ENCODE measurements at regions of chr14 and their contacts with region 1.

Region 1: GRCh38 chr14:50954811-50955372 is 10.6 kb upstream of the PYGL start:
- DNase-seq: peak in 3 of 4 experiments; percentile 12 to 30 (median 19)
- ATAC-seq: peak; percentile 72
- H3K4me3 ChIP-seq: no peak overlapping the region
- H3K27ac ChIP-seq: peak overlapping the region; percentile 91; the same call in 2 of the 3 replicates
- H3K4me1 ChIP-seq: peaks cover 0 to 12% of the 10 kb centered on the region in 2 experiments; a peak in 3 of 5 replicates
- H3K27me3 ChIP-seq: no peaks in the 10 kb centered on the region
- CTCF ChIP-seq: peak in 2 of 3 experiments; percentile 29 to 51; a peak in 3 of 6 replicates
- EP300 ChIP-seq: no peak
- POLR2A ChIP-seq: no peak
- RAD21 ChIP-seq: peak; percentile 38 to 42

Region 2: GRCh38 chr14:50785457-50786063 is 169.3 kb before region 1 on chr14:
- CTCF ChIA-PET with region 1: no interaction called
- POLR2A ChIA-PET with region 1: no interaction called
- in situ Hi-C with region 1: no loop called
- intact Hi-C with region 1: loop called (anchors 5 kb)
- DNase-seq: no peak
- ATAC-seq: no peak
- H3K4me3 ChIP-seq: no peak overlapping the region
- H3K27ac ChIP-seq: no peak overlapping the region
- H3K4me1 ChIP-seq: peaks cover 0 to 6% of the 10 kb centered on the region in 2 experiments; a peak in 1 of 5 replicates
- H3K27me3 ChIP-seq: no peaks in the 10 kb centered on the region
- CTCF ChIP-seq: no peak
- EP300 ChIP-seq: no peak
- POLR2A ChIP-seq: no peak
- RAD21 ChIP-seq: no peak

Region 3: DNA sequence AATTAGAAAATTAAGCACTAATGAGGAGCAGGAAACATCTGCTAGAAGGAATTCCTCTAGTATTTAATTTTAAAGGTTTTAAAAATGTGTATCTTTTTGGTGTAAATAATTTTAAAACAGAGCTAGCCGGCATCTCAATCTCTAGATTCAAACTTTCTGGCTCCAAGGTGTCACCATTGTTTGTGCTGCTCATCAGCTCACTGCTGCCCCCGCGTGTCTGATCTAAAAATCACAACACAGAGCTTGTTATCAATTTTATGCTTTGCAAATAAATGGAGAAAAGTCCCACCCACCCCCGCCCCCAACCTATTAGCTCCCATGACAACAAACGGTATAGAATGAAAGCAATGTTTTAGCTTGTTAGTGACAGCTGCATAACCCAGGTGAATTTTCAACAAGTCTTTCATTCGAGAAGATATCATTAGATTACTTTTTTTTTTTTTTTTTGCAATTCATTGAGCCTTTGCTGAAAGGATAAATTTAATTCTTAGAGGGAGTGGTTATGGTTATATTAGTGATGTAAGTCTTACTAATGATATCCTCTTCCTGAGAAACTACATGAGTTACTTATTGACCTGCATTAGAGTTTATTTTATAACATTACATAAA is 94.3 kb before region 1 on chr14:
- CTCF ChIA-PET with region 1: interaction called, 3 read pairs
- POLR2A ChIA-PET with region 1: no interaction called
- in situ Hi-C with region 1: no loop called
- intact Hi-C with region 1: loop called (anchors 2 kb)
- DNase-seq: peak; percentile 54 to 75 (median 68)
- ATAC-seq: peak; percentile 76
- H3K4me3 ChIP-seq: no peak overlapping the region
- H3K27ac ChIP-seq: no peak overlapping the region
- H3K4me1 ChIP-seq: no peaks in the 10 kb centered on the region; a peak in 1 of 5 replicates
- H3K27me3 ChIP-seq: peaks cover under 1 to 7% of the 10 kb centered on the region in 2 experiments; a peak in 1 of 5 replicates
- CTCF ChIP-seq: peak; percentile 53 to 63 (median 60)
- EP300 ChIP-seq: no peak
- POLR2A ChIP-seq: no peak
- RAD21 ChIP-seq: peak; percentile 50 to 51

Region 4: DNA sequence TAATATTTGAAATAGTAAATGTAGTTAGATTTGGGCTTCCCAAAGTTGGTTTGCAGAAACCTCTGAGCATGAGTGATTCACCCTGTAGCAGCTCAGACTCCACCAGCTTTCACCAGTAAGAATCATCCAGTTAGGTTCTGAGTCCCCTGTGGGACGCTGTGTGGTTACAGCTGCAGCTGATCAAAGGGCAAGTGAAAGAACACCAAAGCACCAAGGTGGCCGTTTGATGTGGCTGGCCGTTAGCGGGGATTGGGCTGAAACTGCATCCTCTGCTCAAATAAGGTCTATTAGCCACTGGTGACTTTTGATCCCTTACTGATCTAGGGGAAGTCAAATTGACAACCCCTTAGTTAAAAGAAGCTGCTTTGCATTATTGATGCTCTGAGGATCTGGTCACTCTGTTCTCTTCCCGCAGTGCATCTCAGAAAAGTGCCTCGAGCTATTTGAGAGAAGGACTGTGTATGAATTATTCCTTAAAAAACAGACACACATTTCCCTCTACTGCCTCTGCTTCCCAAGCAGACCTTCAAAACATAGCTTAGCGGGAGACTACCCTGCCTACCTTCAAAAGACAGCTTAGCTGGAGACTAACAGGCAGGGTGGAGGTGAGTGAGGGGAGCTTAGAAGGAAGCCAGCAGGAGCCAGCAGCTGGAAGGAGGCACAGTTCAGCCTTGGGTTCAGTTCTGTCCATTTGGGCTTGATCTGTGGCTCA is 79.4 kb before region 1 on chr14:
- CTCF ChIA-PET with region 1: no interaction called
- POLR2A ChIA-PET with region 1: no interaction called
- in situ Hi-C with region 1: no loop called
- intact Hi-C with region 1: loop called (anchors 5 kb)
- DNase-seq: no peak
- ATAC-seq: no peak
- H3K4me3 ChIP-seq: no peak overlapping the region
- H3K27ac ChIP-seq: no peak overlapping the region
- H3K4me1 ChIP-seq: peaks cover 0 to 6% of the 10 kb centered on the region in 2 experiments; a peak in 1 of 5 replicates
- H3K27me3 ChIP-seq: peaks cover 8 to 23% of the 10 kb centered on the region in 2 experiments; a peak in 3 of 5 replicates
- CTCF ChIP-seq: no peak
- EP300 ChIP-seq: no peak
- POLR2A ChIP-seq: no peak
- RAD21 ChIP-seq: no peak

Region 5: GRCh38 chr14:51121096-51121495 is 166.2 kb after region 1 on chr14:
- CTCF ChIA-PET with region 1: no interaction called
- POLR2A ChIA-PET with region 1: no interaction called
- in situ Hi-C with region 1: no loop called
- intact Hi-C with region 1: no loop called
- DNase-seq: no peak
- ATAC-seq: no peak
- H3K4me3 ChIP-seq: no peak overlapping the region
- H3K27ac ChIP-seq: no peak overlapping the region
- H3K4me1 ChIP-seq: no peaks in the 10 kb centered on the region
- H3K27me3 ChIP-seq: no peaks in the 10 kb centered on the region
- CTCF ChIP-seq: no peak
- EP300 ChIP-seq: no peak
- POLR2A ChIP-seq: no peak
- RAD21 ChIP-seq: no peak

Region 6: GRCh38 chr14:51219473-51220448 is 264.9 kb after region 1 on chr14:
- CTCF ChIA-PET with region 1: no interaction called
- POLR2A ChIA-PET with region 1: interaction called, 3 read pairs
- in situ Hi-C with region 1: no loop called
- intact Hi-C with region 1: loop called (anchors 10 kb)
- DNase-seq: peak in 2 of 4 experiments; percentile 7 to 22
- ATAC-seq: peak; percentile 54
- H3K4me3 ChIP-seq: no peak overlapping the region
- H3K27ac ChIP-seq: no peak overlapping the region
- H3K4me1 ChIP-seq: no peaks in the 10 kb centered on the region
- H3K27me3 ChIP-seq: no peaks in the 10 kb centered on the region
- CTCF ChIP-seq: peak in 2 of 3 experiments; percentile 13 to 51; a peak in 3 of 6 replicates
- EP300 ChIP-seq: no peak
- POLR2A ChIP-seq: no peak
- RAD21 ChIP-seq: peak; percentile 26 to 27; a peak in 3 of 4 replicates

Measured in K562 (cell line).